ENCODE measurements at regions of chr1 and their contacts with region 1.

Region 1: DNA sequence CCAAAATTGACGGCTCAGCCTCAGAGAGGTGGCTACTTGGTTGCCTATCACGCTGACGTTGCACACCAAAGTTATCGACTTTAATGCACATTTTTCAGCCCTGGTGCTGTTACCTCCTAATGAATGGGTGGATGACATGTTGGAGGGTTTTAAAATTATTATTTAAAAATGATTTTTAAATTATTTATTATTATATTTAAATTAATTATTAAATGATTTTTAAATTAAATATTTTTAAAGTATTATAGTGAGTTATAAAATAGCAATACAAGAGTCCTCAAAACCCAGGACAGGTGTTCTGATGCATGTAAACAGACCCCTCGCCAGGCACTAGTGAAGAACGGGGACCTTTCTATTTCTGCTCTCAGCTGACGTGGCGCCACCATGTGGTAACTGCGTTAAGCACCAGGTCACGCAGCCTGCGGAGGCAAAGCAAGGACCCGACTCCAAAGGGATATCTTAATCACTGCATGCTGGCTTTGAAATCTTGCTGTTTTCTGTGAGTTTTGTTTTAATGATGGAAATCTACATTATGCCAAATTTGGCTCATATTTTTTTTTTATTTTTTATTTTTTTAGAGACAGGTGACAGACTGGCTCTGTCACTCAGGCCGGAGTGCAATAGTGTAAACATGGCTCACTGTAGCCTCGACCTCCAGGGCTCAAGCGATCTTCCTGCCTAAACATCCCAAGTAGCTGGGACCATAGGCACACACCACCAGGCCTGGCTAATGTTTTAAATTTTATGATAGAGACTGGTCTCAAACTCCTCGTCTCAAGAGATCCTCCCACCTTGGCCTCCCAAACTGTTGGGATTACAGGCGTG is 22.6 kb downstream of the CASP9 start:
- DNase-seq: no peak
- ATAC-seq: peak; percentile 92
- H3K4me3 ChIP-seq: no peak overlapping the region
- H3K27ac ChIP-seq: no peak overlapping the region
- H3K4me1 ChIP-seq: no peaks in the 10 kb centered on the region
- H3K27me3 ChIP-seq: no peaks in the 10 kb centered on the region
- CTCF ChIP-seq: peak; percentile 94

Region 2: DNA sequence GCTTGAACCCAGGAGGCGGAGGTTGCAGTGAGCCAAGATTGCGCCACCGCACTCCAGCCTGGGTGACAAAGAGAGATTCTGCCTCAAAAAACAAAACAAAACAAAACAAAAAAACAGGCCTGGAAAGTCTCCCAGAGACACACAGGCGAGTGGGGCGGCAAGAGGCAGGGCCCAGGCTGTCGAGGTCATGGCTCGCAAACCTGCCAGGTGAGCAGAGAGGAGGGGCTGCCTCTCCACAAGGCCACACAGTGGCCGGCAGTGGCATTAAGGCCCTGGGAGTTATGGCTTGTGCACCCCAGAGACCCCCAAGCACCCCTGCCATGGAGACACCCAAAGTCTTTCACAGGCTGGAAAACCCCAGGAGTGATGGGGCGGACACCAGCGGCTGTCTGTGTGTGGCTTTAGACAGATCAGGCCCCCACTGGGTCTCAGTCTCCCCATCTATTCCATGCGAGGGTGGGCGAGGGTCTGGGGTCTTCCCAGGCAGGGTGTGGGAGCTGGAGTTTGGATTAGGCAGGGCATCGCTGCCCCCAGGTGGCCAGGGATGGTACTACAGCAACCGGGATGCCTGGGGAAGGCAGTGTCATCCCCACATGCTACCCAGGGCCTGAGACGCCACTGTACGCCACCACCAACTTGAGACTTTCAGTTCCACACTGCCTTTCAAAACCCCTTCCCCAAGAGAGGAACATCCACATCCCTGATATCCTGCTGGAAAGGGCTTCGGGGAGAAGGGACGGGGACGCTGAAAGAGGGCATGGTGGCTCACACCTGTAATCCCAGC is 70.4 kb before region 1 on chr1:
- CTCF ChIA-PET with region 1: no interaction called
- POLR2A ChIA-PET with region 1: no interaction called
- in situ Hi-C with region 1: no loop called
- intact Hi-C with region 1: loop called (anchors 10 kb)
- DNase-seq: peak; percentile 80
- ATAC-seq: peak; percentile 61
- H3K4me3 ChIP-seq: no peak overlapping the region
- H3K27ac ChIP-seq: no peak overlapping the region
- H3K4me1 ChIP-seq: peaks cover 21% of the 10 kb centered on the region
- H3K27me3 ChIP-seq: no peaks in the 10 kb centered on the region
- CTCF ChIP-seq: peak; percentile 96

Region 3: DNA sequence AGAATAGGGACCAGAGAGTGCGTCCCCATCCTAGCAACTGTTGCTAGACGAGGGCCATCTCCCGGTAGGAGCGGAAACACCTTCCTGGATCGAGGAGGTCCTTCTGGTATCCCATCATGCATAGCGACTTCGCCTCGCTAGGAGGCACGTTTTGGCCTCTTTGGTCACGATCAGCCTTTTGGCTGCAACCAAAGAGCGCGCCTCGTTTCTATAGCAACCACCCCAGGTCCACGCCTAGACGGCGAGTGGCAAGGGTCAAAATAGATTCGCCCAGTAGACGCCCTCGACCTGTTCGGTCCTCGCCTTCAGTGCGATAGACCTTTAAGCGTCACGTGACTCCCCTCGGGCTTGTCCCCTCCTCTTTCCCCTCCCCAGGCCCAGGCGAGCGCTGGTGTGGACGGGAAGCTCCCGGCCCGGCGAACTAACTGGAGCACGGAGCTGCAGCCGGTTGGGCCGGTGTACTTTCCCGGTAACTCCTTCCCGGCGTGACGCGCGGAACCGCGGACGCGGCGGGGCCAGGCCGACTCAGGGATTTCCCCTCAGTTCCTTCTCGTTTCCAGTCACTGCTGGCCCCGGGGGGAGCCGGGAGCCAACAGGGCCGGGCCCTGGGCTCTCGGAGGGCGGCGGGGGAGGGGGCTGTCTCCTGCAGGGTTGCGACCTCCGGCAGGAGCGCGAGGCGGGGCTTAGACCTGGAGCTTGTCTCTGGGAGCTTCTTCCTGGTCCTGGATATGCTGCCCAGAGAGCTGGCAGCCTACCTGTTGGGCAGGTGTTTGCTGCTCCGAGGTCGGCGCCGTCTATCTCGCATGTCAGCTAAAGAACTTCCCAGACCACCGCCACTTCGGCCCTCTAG is 25.3 kb after region 1 on chr1 and contains the start of gene DNAJC16:
- CTCF ChIA-PET with region 1: no interaction called
- POLR2A ChIA-PET with region 1: no interaction called
- in situ Hi-C with region 1: no loop called
- intact Hi-C with region 1: no loop called
- DNase-seq: peak; percentile 100
- ATAC-seq: peak; percentile 81
- H3K4me3 ChIP-seq: peak within 1 kb of the TSS; percentile 68 to 88
- H3K27ac ChIP-seq: peak within 1 kb of the TSS; percentile 79
- H3K4me1 ChIP-seq: peaks cover 20% of the 10 kb centered on the region
- H3K27me3 ChIP-seq: no peaks in the 10 kb centered on the region
- CTCF ChIP-seq: peak; percentile 66; the same call in 1 of the 2 replicates
- total RNA-seq, gene DNAJC16: 22.0 TPM